Ovary (tissue), 10 donors: ENCODE measurements at regions of chrX and their contacts with region 1.

Region 1: GRCh38 chrX:119516157-119516702 is 48.0 kb downstream of the SLC25A5 start:
- DNase-seq: peak in 3 of 5 donors; percentile 13 to 32 (median 20)
- H3K4me3 ChIP-seq: no peak overlapping the region
- H3K27ac ChIP-seq: no peak overlapping the region
- H3K4me1 ChIP-seq: no peaks in the 10 kb centered on the region
- H3K27me3 ChIP-seq: no peaks in the 10 kb centered on the region
- CTCF ChIP-seq: peak in 2 of 3 donors; percentile 48 to 64
- EP300 ChIP-seq: no peak
- POLR2A ChIP-seq: no peak

Region 2: DNA sequence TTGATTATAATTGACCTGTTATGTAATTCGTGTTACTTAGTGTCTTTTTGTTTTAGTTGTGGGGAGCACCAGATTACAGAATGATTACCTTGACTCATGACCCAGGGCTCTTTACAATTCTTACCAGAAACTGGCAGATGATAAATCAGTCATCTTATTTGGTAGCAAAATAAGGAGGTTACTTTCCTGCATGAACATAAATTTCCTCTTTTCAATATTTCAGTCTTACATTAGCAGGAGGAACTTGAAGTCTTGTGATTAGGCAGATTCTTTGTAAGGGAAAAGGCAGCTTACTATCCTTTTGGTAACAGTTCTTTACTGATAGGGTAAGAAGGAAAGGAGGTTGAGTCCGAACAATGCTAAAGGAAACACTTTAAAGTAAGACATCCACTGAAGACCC is 73.9 kb before region 1 on chrX:
- intact Hi-C with region 1: no loop called
- DNase-seq: no peak
- H3K4me3 ChIP-seq: no peak overlapping the region
- H3K27ac ChIP-seq: no peak overlapping the region
- H3K4me1 ChIP-seq: no peaks in the 10 kb centered on the region
- H3K27me3 ChIP-seq: no peaks in the 10 kb centered on the region
- CTCF ChIP-seq: no peak
- EP300 ChIP-seq: no peak
- POLR2A ChIP-seq: no peak

Region 3: DNA sequence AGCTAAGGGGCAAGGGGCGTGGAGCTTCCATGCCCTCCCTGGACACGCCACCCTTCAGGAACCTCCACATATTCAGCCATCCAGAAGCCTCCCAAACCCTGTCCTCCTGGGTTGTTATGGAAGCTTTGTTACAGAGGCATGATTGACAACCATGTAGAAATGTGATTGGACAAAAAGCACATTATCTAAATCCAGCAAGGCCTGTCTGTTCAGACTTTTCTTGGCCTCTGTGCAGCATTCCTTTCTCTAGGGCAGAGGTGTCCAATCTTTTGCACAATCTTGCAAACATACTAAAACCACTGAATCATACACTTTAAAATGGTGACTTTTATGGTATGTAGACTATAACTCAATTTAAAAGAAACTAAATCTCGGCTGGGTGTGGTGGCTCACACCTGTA is 36.3 kb after region 1 on chrX:
- intact Hi-C with region 1: no loop called
- DNase-seq: no peak
- H3K4me3 ChIP-seq: no peak overlapping the region
- H3K27ac ChIP-seq: no peak overlapping the region
- H3K4me1 ChIP-seq: no peaks in the 10 kb centered on the region
- H3K27me3 ChIP-seq: no peaks in the 10 kb centered on the region
- CTCF ChIP-seq: no peak
- EP300 ChIP-seq: no peak
- POLR2A ChIP-seq: no peak

Region 4: DNA sequence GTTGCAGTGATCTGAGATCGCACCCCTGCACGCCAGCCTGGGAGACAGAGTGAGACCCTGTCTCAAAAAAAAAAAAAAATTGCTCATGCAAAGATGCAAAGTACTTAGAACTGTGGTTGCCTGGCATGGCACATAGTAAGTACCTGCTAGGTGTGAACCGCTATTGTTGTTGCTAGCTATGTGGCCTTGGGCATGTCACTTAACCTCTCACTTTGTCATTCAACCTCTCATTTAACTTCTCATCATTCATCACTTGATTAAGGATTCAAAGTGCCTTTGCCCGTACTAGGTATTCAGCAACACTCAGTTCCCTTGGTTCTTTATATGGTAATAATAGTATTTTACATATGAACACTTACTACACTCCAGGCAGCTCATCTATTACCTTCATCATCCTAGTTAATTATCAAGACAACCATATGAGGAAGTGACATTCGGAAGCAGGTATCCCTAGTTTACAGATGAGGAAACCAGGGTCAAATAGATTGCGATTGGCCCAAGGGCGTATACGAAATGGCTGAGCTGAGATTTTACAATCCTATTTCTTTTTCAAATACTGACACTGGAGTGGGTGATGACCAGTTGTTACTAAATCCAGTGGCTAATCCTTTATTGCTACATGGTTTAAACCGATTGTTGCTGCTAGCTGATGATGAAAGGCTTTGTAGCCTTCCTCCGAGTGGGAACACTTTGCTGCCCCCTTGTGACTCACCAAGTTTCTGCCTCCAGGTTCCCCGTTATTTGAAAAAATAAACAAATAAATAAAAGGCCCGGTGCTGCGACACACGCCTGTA is 213.4 kb after region 1 on chrX:
- intact Hi-C with region 1: loop called in 2 of 4 experiments (anchors 10 kb)
- DNase-seq: peak; percentile 36 to 62 (median 48)
- H3K4me3 ChIP-seq: no peak overlapping the region
- H3K27ac ChIP-seq: no peak overlapping the region
- H3K4me1 ChIP-seq: no peaks in the 10 kb centered on the region
- H3K27me3 ChIP-seq: no peaks in the 10 kb centered on the region
- CTCF ChIP-seq: peak in 2 of 3 donors; percentile 29 to 35
- EP300 ChIP-seq: no peak
- POLR2A ChIP-seq: no peak